Mammary epithelial cell (primary cell): ENCODE measurements at regions of chr2 and their contacts with region 1.

Region 1: DNA sequence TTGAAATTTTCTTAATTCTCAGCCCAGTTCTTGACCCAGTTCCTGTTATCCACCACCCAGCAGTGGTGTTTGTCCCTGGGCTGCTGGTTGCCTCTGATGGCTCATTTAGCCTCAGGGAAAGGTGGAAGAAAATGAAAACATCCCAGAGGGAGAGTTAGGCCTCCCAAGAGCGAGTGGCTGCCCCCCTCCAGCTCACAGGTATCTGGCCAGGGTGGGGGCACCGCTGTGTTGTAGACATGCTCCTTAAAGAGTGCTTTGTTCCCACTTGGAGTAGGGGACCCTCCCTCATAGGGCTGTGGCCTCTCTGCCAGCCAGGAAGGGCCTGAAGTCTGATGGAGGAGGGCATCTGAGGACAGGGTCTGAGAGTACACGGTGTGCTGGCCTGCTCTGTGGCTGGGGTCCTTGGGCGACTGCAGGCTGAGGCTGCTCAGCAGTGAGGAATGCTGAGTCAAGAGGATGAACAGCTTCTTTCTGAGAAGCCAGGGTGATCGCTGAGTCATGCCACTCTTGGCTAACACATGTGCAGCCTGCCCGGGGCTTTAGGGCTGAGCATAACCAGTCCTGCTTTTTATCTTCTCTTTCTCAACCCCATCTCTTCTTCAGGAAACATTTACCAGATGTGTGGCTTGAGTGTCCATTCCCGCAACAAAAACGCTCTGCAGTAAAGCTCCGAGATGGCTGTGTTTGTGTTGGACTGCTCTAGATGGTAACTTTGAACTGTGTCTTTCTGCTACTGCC is 72.3 kb downstream of the IL1R2 start:
- DNase-seq: peak; percentile 91
- H3K4me3 ChIP-seq: no peak overlapping the region
- H3K27ac ChIP-seq: peak overlapping the region; percentile 80
- H3K4me1 ChIP-seq: peaks cover 36% of the 10 kb centered on the region
- H3K27me3 ChIP-seq: no peaks in the 10 kb centered on the region
- CTCF ChIP-seq: no peak

Region 2: GRCh38 chr2:102027036-102027980 is 36.8 kb before region 1 on chr2:
- CTCF ChIA-PET with region 1: no interaction called
- dilution Hi-C with region 1: no loop called
- in situ Hi-C with region 1: no loop called
- intact Hi-C with region 1: loop called (anchors 2 kb)
- DNase-seq: peak; percentile 70
- H3K4me3 ChIP-seq: no peak overlapping the region
- H3K27ac ChIP-seq: peak overlapping the region; percentile 49
- H3K4me1 ChIP-seq: peaks cover 34% of the 10 kb centered on the region
- H3K27me3 ChIP-seq: no peaks in the 10 kb centered on the region
- CTCF ChIP-seq: no peak